GM10248 (cell line): ENCODE measurements at regions of chr6 and their contacts with region 1.

Region 1: DNA sequence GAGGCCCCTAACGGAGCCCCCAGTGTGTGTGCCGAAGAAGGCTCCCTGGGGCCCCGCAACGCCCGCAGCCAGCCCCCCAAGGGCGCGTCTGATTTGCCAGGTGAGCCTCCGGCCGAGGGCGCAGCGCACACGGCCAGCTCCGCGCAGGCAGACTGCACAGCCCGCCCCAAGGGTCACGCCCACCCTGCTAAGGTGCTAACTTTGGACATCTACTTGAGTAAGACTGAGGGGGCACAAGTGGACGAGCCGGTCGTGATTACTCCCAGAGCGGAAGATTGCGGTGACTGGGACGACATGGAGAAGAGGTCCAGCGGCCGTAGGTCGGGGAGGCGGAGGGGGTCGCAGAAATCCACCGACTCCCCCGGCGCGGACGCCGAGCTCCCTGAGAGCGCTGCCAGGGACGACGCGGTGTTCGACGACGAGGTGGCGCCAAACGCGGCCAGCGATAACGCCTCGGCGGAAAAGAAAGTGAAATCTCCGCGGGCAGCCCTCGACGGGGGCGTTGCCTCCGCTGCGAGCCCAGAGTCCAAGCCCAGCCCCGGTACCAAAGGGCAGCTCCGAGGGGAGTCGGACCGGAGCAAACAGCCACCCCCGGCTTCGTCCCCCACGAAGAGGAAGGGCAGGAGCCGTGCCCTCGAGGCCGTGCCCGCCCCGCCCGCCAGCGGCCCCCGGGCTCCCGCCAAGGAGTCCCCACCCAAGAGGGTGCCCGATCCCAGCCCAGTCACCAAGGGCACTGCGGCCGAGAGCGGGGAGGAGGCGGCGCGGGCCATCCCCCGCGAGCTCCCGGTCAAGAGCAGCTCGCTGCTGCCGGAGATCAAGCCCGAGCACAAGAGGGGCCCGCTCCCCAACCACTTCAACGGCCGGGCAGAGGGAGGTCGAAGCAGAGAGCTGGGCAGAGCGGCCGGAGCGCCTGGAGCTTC is 117.0 kb downstream of the RTN4IP1 start:
- DNase-seq: peak; percentile 81
- CTCF ChIP-seq: peak; percentile 59

Region 2: DNA sequence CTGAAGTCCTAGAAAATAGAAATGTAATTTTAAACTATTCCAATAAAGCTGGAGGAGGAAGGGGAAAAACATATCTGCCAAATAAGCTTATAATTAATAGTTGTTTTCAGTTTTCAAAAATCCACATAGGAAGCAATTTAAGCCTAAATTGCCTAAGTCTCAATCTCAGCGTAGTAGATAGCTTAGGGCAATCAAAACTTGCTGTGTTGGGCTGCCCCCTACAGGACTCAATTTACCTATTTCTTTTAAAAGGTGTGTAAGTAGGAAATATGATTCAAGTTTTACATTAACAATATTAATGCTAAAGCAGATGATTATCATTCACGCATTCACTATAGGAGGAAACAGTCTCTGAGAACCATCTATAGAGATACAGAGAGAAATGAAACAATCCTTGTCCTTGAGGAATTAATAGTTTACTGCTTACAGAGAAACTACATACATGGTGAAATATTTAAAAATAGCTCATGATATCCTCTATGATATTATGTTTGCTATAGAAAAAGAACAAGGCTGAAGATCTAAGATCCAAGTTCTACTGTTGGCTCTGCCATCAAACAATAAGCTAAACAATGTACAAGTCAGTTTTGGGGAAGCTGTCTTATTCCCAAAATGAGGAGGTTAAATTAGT is 288.9 kb before region 1 on chr6:
- CTCF ChIA-PET with region 1: no interaction called
- POLR2A ChIA-PET with region 1: no interaction called
- DNase-seq: peak; percentile 30
- CTCF ChIP-seq: peak; percentile 59

Region 3: DNA sequence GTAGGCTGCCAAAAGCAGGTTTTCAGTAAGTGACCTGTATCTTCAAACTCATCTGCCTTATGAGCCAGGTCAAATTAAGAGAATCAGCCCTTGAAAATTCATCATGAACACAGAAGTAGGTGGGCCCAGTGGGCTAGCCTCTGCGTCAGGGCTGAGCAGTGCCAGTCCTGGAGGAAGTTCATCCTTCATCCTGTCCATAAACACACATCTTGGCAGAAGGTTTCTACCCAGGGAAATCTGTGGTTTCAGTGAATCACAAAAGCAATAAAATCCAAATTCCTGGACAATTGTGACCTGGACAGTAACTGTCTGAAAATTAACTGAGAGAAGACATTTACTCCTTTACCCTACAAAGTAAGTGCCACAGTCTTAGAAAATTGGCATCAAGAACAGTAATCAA is 259.1 kb before region 1 on chr6:
- CTCF ChIA-PET with region 1: no interaction called
- POLR2A ChIA-PET with region 1: no interaction called
- DNase-seq: no peak
- CTCF ChIP-seq: no peak

Region 4: DNA sequence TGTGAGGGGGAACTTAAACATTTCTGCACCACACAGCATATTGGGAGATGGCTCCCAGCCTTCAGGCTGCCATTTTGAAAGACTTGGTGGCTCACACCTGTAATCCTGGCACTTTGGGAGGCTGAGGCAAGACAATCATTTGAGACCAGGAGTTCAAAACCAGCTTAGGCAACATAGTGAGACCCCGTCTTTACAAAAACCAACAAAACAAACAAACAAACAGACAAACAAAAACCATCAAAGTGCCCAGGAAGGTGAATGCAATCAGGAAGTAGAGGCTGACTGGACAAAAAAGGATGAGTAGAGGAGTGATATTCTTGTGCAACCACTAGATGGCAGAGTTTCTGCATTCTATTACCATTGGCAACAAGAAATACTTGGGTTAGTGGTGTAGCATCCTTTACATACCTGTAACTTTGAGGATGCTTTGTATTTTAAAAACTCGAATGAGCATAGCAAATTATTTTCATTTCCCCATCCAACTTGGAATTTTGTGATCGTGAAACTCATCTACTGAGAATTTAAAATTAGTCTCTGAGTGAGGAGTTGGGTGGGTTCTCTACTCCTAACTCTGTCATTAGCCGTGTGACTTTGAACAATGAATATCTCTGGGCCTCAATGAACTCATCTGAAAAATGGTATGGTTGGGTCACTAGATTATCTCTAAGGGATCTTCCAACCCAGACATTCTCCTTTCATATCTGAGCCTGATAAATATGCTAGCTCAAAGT is 67.4 kb before region 1 on chr6:
- CTCF ChIA-PET with region 1: interaction called, 14 read pairs
- POLR2A ChIA-PET with region 1: interaction called, 3 read pairs
- DNase-seq: peak; percentile 64
- CTCF ChIP-seq: peak; percentile 70

Region 5: DNA sequence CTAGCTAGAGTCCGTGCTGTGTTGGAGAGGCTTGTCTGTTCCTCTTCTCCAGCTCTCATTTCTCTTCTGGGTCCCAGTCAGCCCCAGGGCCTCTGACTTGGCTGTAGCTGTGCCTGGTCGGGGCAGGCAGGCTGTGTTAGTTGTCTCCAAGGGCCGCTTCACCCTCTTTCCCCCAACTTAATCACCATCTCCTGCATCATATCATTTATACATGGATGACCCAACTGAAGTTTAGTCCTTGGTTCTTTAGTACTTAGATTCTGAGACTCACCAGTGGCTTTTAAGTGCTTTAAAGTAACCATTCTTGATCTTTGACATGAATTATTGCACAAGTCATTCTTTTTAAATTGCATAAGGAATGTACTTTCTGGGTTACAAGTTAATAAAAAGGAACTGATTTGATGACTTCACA is 10.3 kb before region 1 on chr6:
- CTCF ChIA-PET with region 1: interaction called, 15 read pairs
- POLR2A ChIA-PET with region 1: no interaction called
- DNase-seq: no peak
- CTCF ChIP-seq: no peak

Region 6: DNA sequence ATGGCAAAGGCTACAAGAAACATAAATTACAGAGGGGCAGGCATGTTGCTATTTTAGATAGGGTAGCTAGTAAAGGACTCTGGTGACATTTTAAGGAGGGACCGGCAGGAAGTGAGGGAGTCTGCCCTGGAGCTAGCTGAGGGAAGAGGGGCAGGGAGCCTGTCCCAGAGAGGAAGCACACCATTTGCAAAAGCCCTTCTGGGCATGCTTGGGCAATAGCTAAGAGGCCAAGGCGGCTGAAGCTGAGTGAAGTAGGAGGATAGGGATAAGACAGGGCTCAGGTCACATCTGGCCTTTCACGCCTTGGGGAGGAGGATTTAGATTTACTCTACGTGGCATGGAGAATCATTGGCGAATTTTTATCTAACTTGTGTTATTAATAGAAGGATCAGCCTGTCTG is 20.8 kb after region 1 on chr6:
- CTCF ChIA-PET with region 1: interaction called, 11 read pairs
- POLR2A ChIA-PET with region 1: no interaction called
- DNase-seq: no peak
- CTCF ChIP-seq: no peak

Region 7: DNA sequence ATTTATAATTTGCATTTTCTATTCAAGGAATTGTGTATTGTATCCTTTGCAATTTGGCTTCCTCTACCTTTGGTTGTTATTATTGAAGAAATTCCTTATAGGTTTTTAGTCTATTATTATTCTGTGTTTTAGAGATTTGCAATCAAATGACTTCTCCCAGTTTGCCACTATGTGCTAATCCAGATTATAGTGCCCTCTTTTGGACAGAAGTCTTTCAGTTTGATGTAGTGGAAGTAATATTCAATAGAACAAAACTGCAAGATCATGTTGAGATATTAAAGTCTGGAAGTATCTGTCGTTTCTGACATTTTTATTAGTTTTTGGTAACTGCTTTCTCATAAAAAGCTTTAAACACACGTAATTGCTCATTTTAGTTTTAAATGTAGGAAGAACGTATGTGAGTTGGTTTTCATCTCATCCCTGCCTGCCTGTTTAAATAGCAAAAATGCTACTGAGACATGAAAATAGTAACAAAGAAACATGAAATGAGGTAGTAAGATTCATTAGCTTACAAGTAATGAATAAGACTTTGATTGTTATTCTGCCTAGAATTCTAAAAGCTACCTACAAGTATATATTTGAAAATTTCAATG is 44.2 kb after region 1 on chr6:
- CTCF ChIA-PET with region 1: interaction called, 12 read pairs
- POLR2A ChIA-PET with region 1: no interaction called
- DNase-seq: no peak
- CTCF ChIP-seq: peak; percentile 54

Region 8: DNA sequence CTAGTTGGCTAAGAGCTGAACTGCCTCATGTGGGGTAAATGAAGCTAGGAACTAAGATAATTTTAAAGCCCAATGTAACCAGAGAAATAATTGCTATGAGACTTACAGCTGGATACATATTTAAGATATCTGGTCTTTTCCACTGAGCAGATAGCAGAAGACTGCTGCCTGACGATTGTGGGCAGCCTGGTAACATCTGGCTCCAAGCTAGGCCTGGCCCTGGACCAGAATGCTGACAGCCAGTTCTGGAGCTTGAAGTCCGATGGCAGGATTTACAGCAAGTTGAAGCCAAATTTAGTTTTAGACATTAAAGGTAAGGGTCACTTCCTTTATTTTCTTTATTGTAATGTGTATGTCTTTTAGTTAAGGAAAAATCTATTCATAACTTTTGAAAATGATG is 51.3 kb after region 1 on chr6:
- CTCF ChIA-PET with region 1: interaction called, 26 read pairs
- POLR2A ChIA-PET with region 1: no interaction called
- DNase-seq: no peak
- CTCF ChIP-seq: no peak